ENCODE measurements at regions of chr20 and their contacts with region 1.

Region 1: GRCh38 chr20:38973645-38974044 is 11.5 kb downstream of the DHX35 start:
- DNase-seq: no peak
- ATAC-seq: no peak
- H3K4me3 ChIP-seq: no peak overlapping the region
- H3K4me3 Mint-ChIP-seq: no peak overlapping the region
- H3K27ac ChIP-seq: no peak overlapping the region
- H3K27ac Mint-ChIP-seq: no peak overlapping the region
- H3K4me1 ChIP-seq: no peaks in the 10 kb centered on the region
- H3K4me1 Mint-ChIP-seq: peaks cover 0 to 9% (median 5%) of the 10 kb centered on the region in 3 donors
- H3K27me3 ChIP-seq: no peaks in the 10 kb centered on the region
- H3K27me3 Mint-ChIP-seq: no peaks in the 10 kb centered on the region

Region 2: DNA sequence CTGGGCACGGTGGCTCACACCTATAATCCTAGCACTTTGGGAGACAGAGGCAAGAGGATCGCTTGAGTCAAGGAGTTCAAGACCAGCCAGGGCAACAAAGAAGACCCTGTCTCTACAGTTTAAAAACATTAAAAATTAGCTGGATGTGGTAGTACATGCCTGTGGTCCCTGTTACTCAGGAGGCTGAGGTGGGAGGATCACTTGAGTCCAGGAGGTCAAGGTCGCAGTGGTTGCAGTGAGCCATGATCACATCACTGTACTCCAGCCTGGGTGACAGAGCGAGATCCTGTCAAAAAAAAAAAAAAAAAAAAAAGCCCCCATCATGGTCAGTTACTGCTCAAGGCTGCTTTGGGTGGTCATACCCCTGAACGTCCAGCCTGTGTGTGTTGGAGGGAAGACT is 316.3 kb before region 1 on chr20:
- CTCF ChIA-PET with region 1: no interaction called
- POLR2A ChIA-PET with region 1: interaction called in 1 of 2 experiments, 11 read pairs
- DNase-seq: no peak
- ATAC-seq: no peak
- H3K4me3 ChIP-seq: no peak overlapping the region
- H3K4me3 Mint-ChIP-seq: no peak overlapping the region
- H3K27ac ChIP-seq: no peak overlapping the region
- H3K27ac Mint-ChIP-seq: no peak overlapping the region
- H3K4me1 ChIP-seq: peaks cover 0 to 2% of the 10 kb centered on the region in 2 experiments
- H3K4me1 Mint-ChIP-seq: no peaks in the 10 kb centered on the region
- H3K27me3 ChIP-seq: peaks cover 0 to 52% of the 10 kb centered on the region in 2 experiments
- H3K27me3 Mint-ChIP-seq: peaks cover 35 to 55% of the 10 kb centered on the region in 2 donors

Region 3: DNA sequence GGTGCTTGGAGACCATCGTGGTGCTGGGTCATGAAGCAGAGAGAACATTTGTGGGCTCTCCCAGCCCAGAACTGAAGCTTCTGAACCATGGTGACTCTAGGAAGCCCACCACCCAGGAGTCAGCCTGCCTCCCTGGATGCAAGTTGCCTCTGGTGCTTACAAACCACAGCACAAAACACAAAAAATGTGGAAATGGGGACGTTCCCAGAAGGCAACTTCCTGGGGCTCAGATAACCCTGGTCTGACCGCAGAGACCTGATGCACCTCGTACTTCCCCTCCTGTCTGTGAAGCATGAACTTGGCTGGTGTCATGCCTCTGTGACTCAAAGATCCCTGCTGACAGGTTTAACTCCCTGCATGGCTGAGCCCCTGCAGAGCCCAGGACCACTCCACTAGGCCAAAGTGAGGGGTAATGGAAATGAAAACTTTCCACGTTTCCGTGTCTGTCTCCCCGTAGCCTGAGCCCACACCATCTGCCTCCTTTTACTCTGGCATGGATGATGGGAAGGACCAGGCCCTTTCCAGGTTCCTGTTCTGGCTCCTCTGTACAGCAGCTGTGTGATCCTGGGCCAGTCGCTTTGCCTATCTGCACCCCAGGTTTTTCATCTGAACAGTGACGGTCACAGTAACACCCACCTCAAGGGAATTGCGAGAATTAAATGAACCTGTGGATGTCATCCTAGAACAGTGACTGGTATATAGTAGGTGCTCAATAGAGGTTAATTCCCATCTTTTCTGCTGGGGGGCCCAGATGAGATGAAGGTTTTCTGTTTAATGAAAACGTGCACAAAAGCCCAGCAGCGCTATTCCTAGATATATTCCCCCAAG is 110.4 kb before region 1 on chr20:
- CTCF ChIA-PET with region 1: no interaction called
- POLR2A ChIA-PET with region 1: no interaction called
- DNase-seq: peak in 27 of 35 experiments; percentile 1 to 82 (median 41)
- ATAC-seq: peak; percentile 66 to 87 (median 83)
- H3K4me3 ChIP-seq: no peak overlapping the region
- H3K4me3 Mint-ChIP-seq: peak overlapping the region; percentile 4 to 31 (median 30)
- H3K27ac ChIP-seq: peak overlapping the region; percentile 76
- H3K27ac Mint-ChIP-seq: peak overlapping the region; percentile 88 to 89
- H3K4me1 ChIP-seq: peaks cover 4 to 70% of the 10 kb centered on the region in 2 experiments
- H3K4me1 Mint-ChIP-seq: peaks cover 57 to 75% (median 68%) of the 10 kb centered on the region in 3 donors
- H3K27me3 ChIP-seq: no peaks in the 10 kb centered on the region
- H3K27me3 Mint-ChIP-seq: no peaks in the 10 kb centered on the region

Region 4: GRCh38 chr20:38962044-38962927 is 11.4 kb before region 1 on chr20 and contains the start of gene DHX35:
- CTCF ChIA-PET with region 1: interaction called in 1 of 2 experiments, 3 read pairs
- POLR2A ChIA-PET with region 1: interaction called in 1 of 2 experiments, 10 read pairs
- DNase-seq: peak; percentile 97 to 100 (median 99)
- ATAC-seq: peak; percentile 97 to 100 (median 99)
- H3K4me3 ChIP-seq: peak within 1 kb of the TSS; percentile 74 to 99
- H3K4me3 Mint-ChIP-seq: peak within 1 kb of the TSS; percentile 89 to 98 (median 92)
- H3K27ac ChIP-seq: peak within 1 kb of the TSS; percentile 58
- H3K27ac Mint-ChIP-seq: peak within 1 kb of the TSS; percentile 95
- H3K4me1 ChIP-seq: peaks cover 12 to 15% of the 10 kb centered on the region in 2 experiments
- H3K4me1 Mint-ChIP-seq: peaks cover 26 to 36% (median 33%) of the 10 kb centered on the region in 3 donors
- H3K27me3 ChIP-seq: no peaks in the 10 kb centered on the region
- H3K27me3 Mint-ChIP-seq: no peaks in the 10 kb centered on the region
- total RNA-seq, gene DHX35: 8.6 to 11.5 (median 11.2) TPM

Region 5: GRCh38 chr20:40706977-40707582 is 1733.4 kb after region 1 on chr20:
- CTCF ChIA-PET with region 1: no interaction called
- POLR2A ChIA-PET with region 1: no interaction called
- DNase-seq: no peak
- ATAC-seq: no peak
- H3K4me3 ChIP-seq: no peak overlapping the region
- H3K4me3 Mint-ChIP-seq: no peak overlapping the region
- H3K27ac ChIP-seq: no peak overlapping the region
- H3K27ac Mint-ChIP-seq: no peak overlapping the region
- H3K4me1 ChIP-seq: no peaks in the 10 kb centered on the region
- H3K4me1 Mint-ChIP-seq: no peaks in the 10 kb centered on the region
- H3K27me3 ChIP-seq: no peaks in the 10 kb centered on the region
- H3K27me3 Mint-ChIP-seq: peaks cover 7 to 14% of the 10 kb centered on the region in 2 donors